Lower leg skin (tissue), 4 donors: ENCODE measurements at regions of chr1 and their contacts with region 1.

Region 1: GRCh38 chr1:165597883-165598675 is 33.0 kb upstream of the MGST3 start:
- DNase-seq: peak; percentile 94 to 98
- H3K4me3 ChIP-seq: peak overlapping the region; percentile 19
- CTCF ChIP-seq: no peak
- POLR2A ChIP-seq: no peak

Region 2: DNA sequence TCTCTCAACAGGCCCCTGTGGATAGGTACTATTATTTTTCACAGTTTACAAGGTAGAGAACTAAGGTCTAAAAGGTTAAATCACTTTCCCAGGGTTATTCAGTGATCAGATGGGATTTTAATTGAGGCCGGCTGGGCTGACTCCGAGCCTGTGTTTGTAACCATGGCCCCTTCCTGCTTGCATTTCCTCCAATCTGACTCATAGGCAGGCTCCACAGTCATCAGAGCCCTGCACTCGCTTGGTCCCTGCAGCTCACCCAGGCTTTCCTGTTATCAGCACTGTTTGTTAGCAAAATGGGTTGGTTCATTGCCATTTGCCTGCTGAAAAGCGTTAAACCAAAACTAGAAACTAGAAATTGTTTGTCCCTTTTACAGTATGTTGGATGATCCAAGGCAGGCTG is 200.1 kb before region 1 on chr1:
- intact Hi-C with region 1: loop called (anchors 5 kb)
- DNase-seq: peak in 1 of 2 donors; percentile 45
- H3K4me3 ChIP-seq: no peak overlapping the region
- CTCF ChIP-seq: no peak
- POLR2A ChIP-seq: no peak

Region 3: GRCh38 chr1:165409657-165410358 is 188.3 kb before region 1 on chr1:
- intact Hi-C with region 1: no loop called
- DNase-seq: no peak
- H3K4me3 ChIP-seq: no peak overlapping the region
- CTCF ChIP-seq: no peak
- POLR2A ChIP-seq: no peak